ENCODE measurements at regions of chr14 and their contacts with region 1.

Region 1: DNA sequence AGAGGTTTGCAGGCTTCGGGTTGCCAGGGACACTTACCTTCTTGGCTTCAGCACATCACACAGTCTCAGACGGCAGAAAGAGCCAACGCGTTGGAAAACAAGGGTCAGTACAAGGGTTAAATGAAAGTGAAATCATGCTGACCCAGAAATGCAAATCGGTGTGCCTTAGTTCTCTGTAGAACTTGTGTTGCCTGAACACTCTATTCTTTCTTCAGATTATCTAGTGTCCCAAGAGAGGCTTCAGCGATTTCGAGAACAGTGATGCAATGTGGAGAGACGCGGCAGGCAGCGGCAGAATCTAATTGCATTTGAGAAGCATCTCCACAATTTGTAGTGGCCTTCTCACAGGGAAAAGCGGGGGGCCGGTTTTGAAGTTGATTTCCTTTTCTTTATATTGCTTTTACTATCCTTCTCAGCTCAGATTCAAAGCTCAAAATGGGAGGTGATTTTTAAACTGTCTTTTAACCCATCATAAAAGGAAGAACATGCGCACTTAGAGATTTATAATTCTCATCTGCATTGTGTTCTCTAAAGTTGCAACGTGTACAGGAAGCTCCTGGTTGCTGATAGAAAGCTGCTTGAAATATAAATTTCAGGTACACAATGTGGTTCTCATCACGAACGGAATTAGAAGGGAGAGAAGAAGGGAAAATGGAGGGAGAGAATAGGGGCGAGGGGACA is 67.8 kb upstream of the EGLN3 start:
- DNase-seq: peak; percentile 9
- H3K4me3 Mint-ChIP-seq: peak overlapping the region; percentile 82
- H3K27ac Mint-ChIP-seq: peak overlapping the region; percentile 93
- H3K4me1 Mint-ChIP-seq: peaks cover 34% of the 10 kb centered on the region
- H3K27me3 Mint-ChIP-seq: no peaks in the 10 kb centered on the region

Region 2: GRCh38 chr14:33979613-33980276 is 39.0 kb before region 1 on chr14:
- intact Hi-C with region 1: loop called (anchors 5 kb)
- DNase-seq: no peak
- H3K4me3 Mint-ChIP-seq: no peak overlapping the region
- H3K27ac Mint-ChIP-seq: no peak overlapping the region
- H3K4me1 Mint-ChIP-seq: peaks cover 22% of the 10 kb centered on the region
- H3K27me3 Mint-ChIP-seq: peaks cover 2% of the 10 kb centered on the region

Region 3: GRCh38 chr14:34184126-34184525 is 165.4 kb after region 1 on chr14:
- intact Hi-C with region 1: no loop called
- DNase-seq: no peak
- H3K4me3 Mint-ChIP-seq: no peak overlapping the region
- H3K27ac Mint-ChIP-seq: no peak overlapping the region
- H3K4me1 Mint-ChIP-seq: peaks cover 6% of the 10 kb centered on the region
- H3K27me3 Mint-ChIP-seq: peaks cover 6% of the 10 kb centered on the region

Measured in activated T-helper 2 cell treated with anti-CD3 and anti-CD28 coated beads, Interferon-gamma antibody, Interleukin-2, Interleukin-4, amounts not matched to agents 10 μg/mL and 5 μg/mL and 100 μg/mL, durations not matched to agents 14 hours and 24 hours and 36 hours (primary cell).